Panc1 (cell line): ENCODE measurements at regions of chr19 and their contacts with region 1.

Region 1: DNA sequence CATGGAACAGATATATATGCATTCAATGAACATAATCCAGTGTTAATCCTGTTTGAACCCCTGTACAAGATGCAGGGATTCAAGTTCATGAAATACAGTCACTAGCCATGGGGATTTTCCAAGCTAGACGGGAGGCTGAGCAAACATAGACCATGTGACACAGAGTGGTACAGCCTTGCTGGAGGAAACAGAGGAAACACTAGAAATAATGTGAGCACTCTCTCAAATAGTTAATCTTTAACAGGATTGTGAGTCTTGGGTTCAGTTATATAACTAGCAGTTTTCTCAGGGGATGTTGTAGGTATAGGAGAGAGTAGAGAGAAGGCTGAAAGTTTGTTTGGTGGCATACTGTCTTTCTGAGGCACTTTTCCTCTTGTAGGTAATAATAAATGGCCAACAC is 13.9 kb upstream of the LGALS16 start:
- DNase-seq: no peak
- ATAC-seq: no peak
- H3K4me3 ChIP-seq: no peak overlapping the region
- H3K27ac ChIP-seq: no peak overlapping the region
- H3K4me1 ChIP-seq: no peaks in the 10 kb centered on the region
- H3K27me3 ChIP-seq: peaks cover 86% of the 10 kb centered on the region
- CTCF ChIP-seq: peak; percentile 40; the same call in 1 of the 2 replicates

Region 2: GRCh38 chr19:39199025-39199424 is 442.7 kb before region 1 on chr19:
- CTCF ChIA-PET with region 1: no interaction called
- POLR2A ChIA-PET with region 1: no interaction called
- in situ Hi-C with region 1: no loop called
- intact Hi-C with region 1: no loop called
- DNase-seq: no peak
- ATAC-seq: peak; percentile 19
- H3K4me3 ChIP-seq: no peak overlapping the region
- H3K27ac ChIP-seq: no peak overlapping the region
- H3K4me1 ChIP-seq: peaks cover 13% of the 10 kb centered on the region
- H3K27me3 ChIP-seq: peaks cover 3% of the 10 kb centered on the region; the same call in 1 of the 2 replicates
- CTCF ChIP-seq: no peak

Region 3: GRCh38 chr19:39415111-39416046 is 226.4 kb before region 1 on chr19:
- CTCF ChIA-PET with region 1: no interaction called
- POLR2A ChIA-PET with region 1: no interaction called
- in situ Hi-C with region 1: no loop called
- intact Hi-C with region 1: no loop called
- DNase-seq: no peak
- ATAC-seq: no peak
- H3K4me3 ChIP-seq: peak overlapping the region; percentile 42 to 55
- H3K27ac ChIP-seq: peak overlapping the region; percentile 92
- H3K4me1 ChIP-seq: peaks cover 42% of the 10 kb centered on the region
- H3K27me3 ChIP-seq: no peaks in the 10 kb centered on the region
- CTCF ChIP-seq: no peak

Region 4: GRCh38 chr19:39679056-39679790 is 37.5 kb after region 1 on chr19:
- CTCF ChIA-PET with region 1: no interaction called
- POLR2A ChIA-PET with region 1: interaction called, 12 read pairs
- in situ Hi-C with region 1: loop called (anchors 5 kb)
- intact Hi-C with region 1: no loop called
- DNase-seq: no peak
- ATAC-seq: peak; percentile 6
- H3K4me3 ChIP-seq: no peak overlapping the region
- H3K27ac ChIP-seq: no peak overlapping the region
- H3K4me1 ChIP-seq: peaks cover 11% of the 10 kb centered on the region
- H3K27me3 ChIP-seq: peaks cover 54% of the 10 kb centered on the region
- CTCF ChIP-seq: no peak

Region 5: GRCh38 chr19:39780894-39781293 is 139.1 kb after region 1 on chr19:
- CTCF ChIA-PET with region 1: no interaction called
- POLR2A ChIA-PET with region 1: no interaction called
- in situ Hi-C with region 1: no loop called
- intact Hi-C with region 1: no loop called
- DNase-seq: no peak
- ATAC-seq: no peak
- H3K4me3 ChIP-seq: no peak overlapping the region
- H3K27ac ChIP-seq: no peak overlapping the region
- H3K4me1 ChIP-seq: no peaks in the 10 kb centered on the region
- H3K27me3 ChIP-seq: peaks cover 87% of the 10 kb centered on the region
- CTCF ChIP-seq: no peak

Region 6: DNA sequence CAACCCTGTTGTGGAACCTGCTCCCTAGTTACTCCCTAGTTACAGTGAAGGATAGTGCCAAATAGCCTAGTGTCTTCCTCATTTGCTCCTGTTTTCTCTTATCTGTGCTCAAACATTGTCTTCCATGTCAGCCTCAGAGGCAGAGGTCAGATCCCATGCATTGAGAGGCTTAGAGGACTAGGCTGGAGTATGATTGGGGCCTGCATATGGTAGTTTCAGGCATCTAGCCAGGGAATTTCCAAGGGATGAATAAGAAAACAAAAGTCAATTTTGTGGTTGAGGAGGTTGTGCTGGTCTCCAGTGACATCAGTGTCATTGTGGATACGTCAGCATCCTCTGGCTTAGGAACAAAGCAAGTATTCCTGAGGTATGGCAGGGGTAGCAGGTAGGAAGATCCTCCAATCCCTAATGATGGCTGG is 364.5 kb after region 1 on chr19:
- CTCF ChIA-PET with region 1: no interaction called
- POLR2A ChIA-PET with region 1: interaction called, 11 read pairs
- in situ Hi-C with region 1: no loop called
- intact Hi-C with region 1: no loop called
- DNase-seq: peak; percentile 100
- ATAC-seq: peak; percentile 91
- H3K4me3 ChIP-seq: no peak overlapping the region
- H3K27ac ChIP-seq: no peak overlapping the region
- H3K4me1 ChIP-seq: peaks cover 8% of the 10 kb centered on the region; the same call in 1 of the 2 replicates
- H3K27me3 ChIP-seq: no peaks in the 10 kb centered on the region
- CTCF ChIP-seq: no peak

Region 7: DNA sequence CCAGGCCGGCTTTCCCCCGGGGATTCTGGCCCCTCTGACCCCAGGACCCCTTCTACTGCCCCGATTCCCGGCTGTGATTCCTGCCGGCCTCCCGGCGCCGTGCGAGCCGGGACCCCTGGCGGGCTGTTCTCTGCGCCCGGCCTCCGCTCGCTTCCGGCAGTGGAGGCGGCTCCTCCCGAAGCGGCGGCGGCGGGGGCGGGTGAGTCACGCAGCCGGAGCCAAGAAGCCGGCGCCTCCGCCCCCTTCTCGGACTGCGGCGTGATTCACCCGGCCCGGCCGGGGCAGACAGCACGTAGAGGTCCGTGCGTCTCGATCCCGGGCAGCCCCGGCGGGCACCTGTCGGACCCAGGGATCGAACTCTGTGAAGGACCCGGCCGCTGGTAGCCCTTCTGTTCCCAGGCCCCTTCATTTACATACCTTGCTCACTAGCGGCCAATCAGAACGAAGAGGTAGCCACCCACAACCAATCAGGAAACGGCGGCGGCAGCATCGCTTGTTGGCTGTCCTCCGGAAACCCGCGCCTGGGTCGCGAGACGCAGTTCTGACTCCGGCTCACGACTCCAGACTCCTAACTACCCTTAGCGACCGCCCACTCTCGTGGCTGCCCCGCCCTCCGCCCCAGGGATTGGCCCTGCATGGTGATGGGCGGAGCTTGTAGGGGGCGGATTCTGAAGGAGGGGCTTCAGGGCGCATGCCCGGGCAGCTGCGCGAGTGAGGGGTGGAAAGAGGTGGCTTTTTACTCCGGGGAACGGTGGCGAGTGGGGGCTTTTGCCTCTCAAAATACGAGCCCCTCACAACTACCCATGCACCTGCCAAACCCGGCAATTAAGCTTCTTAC is 783.9 kb after region 1 on chr19 and contains the start of gene SERTAD1:
- CTCF ChIA-PET with region 1: no interaction called
- POLR2A ChIA-PET with region 1: no interaction called
- in situ Hi-C with region 1: no loop called
- intact Hi-C with region 1: no loop called
- DNase-seq: peak; percentile 87
- ATAC-seq: peak; percentile 85
- H3K4me3 ChIP-seq: peak within 1 kb of the TSS; percentile 85 to 93
- H3K27ac ChIP-seq: peak within 1 kb of the TSS; percentile 94
- H3K4me1 ChIP-seq: peaks cover 24% of the 10 kb centered on the region
- H3K27me3 ChIP-seq: no peaks in the 10 kb centered on the region
- CTCF ChIP-seq: peak; percentile 92
- total RNA-seq, gene SERTAD1: 13.4 TPM